Heart right ventricle (tissue), 16 donors: ENCODE measurements at regions of chr13 and their contacts with region 1.

Region 1: DNA sequence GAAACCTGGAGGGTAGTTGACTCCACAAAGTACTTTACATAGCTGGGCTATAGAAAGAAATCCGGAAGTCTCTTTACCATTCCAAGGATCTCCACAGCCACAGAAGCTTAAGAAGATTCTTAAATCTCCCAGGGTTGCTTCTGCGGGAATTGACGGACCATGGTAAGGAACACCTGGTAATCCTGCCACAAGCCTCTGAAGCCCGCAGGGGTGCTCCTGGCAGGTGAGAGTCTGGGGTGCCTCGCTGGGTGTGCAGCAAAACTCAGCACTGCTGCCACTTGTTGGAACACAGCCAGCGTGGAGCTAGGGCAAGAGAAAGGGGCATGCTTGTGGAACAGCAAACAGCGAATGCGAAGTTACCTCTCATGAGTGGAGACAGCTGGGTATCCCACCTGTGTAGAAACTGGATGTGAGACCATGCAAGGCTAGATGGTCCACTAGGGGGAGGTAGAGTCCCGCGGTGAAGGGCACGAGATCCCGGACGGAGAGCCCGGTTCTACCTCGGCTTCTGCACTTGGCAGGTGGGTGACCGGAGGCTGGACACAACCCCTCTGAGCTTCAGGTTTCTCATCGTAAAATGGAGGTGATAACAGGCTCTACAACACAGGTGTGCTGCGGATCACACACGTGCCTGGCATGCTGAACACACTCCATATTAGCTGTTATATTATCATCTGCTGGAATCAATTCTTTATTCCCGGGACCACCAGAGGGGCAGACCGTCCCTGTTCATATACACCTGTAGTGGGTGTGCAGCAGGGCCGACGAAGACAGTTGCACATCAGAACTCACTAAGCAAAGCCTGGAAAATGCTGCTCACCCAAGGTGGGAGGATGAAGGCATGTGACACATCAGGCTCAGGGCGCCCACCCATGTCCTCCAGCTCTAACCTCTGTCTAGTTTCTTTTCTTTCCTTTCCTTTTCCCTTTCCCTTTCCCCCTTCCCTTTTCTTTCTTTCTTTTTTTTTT is 24.1 kb upstream of the UBAC2 start:
- DNase-seq: peak; percentile 67 to 73
- ATAC-seq: peak; percentile 80 to 96 (median 90)
- H3K4me3 ChIP-seq: no peak overlapping the region
- H3K27ac ChIP-seq: no peak overlapping the region
- H3K4me1 ChIP-seq: peaks cover 0 to 20% (median 0%) of the 10 kb centered on the region in 9 donors
- H3K27me3 ChIP-seq: peaks cover 0 to 48% (median 15%) of the 10 kb centered on the region in 7 donors
- CTCF ChIP-seq: peak; percentile 89 to 98 (median 96)

Region 2: GRCh38 chr13:98853771-98854221 is 322.8 kb before region 1 on chr13:
- intact Hi-C with region 1: no loop called
- DNase-seq: no peak
- ATAC-seq: peak in 2 of 8 donors; percentile 18 to 22
- H3K4me3 ChIP-seq: no peak overlapping the region
- H3K27ac ChIP-seq: no peak overlapping the region
- H3K4me1 ChIP-seq: no peaks in the 10 kb centered on the region
- H3K27me3 ChIP-seq: no peaks in the 10 kb centered on the region
- CTCF ChIP-seq: no peak

Region 3: DNA sequence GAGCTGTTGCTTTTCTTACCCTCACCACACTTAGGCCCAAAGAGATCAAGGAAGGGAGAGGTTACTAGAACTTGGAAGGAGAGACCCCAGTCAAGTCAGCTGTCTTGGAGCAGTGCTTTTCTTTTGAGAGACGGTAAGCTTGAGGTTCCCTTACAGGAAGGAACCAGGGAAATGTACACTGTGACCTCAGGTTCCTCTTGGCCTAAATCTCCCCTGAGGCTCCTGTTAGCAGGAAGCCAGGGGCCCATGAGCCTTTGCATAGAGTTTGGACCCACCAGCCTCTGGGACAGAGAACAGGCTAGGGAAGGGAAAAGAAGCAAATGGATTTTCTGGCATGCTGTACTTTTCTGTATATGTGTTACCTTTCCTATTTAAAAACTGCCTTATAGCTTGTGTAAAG is 87.5 kb after region 1 on chr13:
- intact Hi-C with region 1: loop called (anchors 1 to 5 kb)
- DNase-seq: no peak
- ATAC-seq: peak in 3 of 8 donors; percentile 29 to 43 (median 30)
- H3K4me3 ChIP-seq: no peak overlapping the region
- H3K27ac ChIP-seq: peak overlapping the region in 3 of 10 donors; percentile 7 to 42 (median 19)
- H3K4me1 ChIP-seq: peaks cover 0 to 24% (median 18%) of the 10 kb centered on the region in 9 donors
- H3K27me3 ChIP-seq: no peaks in the 10 kb centered on the region
- CTCF ChIP-seq: no peak

Region 4: DNA sequence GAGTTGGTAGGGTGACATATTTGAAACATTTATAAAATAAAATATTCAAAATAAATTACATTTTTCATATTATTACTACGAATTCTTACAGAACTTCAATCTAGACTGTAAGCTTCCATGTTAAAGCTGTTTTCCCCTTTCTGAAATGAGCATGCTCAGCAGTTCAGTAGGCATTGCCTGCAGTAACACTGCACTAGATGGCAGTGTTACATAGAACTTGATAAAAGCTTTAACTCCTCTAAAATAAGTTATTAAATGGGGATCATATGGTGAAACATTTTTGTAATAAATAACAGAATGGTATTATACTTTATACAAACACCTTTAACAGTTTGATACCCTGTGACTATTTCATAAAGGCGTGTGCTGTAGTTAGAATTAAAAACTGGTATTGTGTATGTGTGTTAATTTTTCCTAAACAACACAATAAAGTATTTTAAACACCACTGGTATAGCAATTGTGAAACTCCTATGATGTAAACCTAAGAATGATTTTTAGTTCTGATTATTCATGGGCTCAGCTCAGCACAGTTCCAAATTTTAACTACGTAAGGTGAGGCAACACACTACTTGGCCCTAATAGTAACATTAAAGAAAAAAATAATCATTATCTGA is 93.1 kb after region 1 on chr13:
- intact Hi-C with region 1: loop called (anchors 1 to 5 kb)
- DNase-seq: no peak
- ATAC-seq: peak in 7 of 8 donors; percentile 50 to 89 (median 72)
- H3K4me3 ChIP-seq: no peak overlapping the region
- H3K27ac ChIP-seq: peak overlapping the region in 1 of 10 donors; percentile 86
- H3K4me1 ChIP-seq: peaks cover 0 to 40% (median 4%) of the 10 kb centered on the region in 9 donors
- H3K27me3 ChIP-seq: no peaks in the 10 kb centered on the region
- CTCF ChIP-seq: peak; percentile 26 to 84 (median 65)